ENCODE measurements at regions of chr1 and their contacts with region 1.

Region 1: GRCh38 chr1:205591522-205592351 is 40.1 kb downstream of the ELK4 start:
- DNase-seq: peak; percentile 74 to 91
- ATAC-seq: peak; percentile 83

Region 2: GRCh38 chr1:205211169-205211838 is 380.4 kb before region 1 on chr1 and contains the start of gene DSTYK:
- intact Hi-C with region 1: no loop called
- DNase-seq: peak; percentile 91 to 95
- ATAC-seq: peak; percentile 92
- total RNA-seq, gene DSTYK: 4.7 to 7.0 TPM

Region 3: GRCh38 chr1:205631727-205632373 is 40.1 kb after region 1 on chr1 and contains the start of gene ELK4:
- intact Hi-C with region 1: loop called in 1 of 2 experiments (anchors 5 kb)
- DNase-seq: peak; percentile 99 to 100
- ATAC-seq: peak; percentile 93
- total RNA-seq, gene ELK4: 37.4 to 39.5 TPM

Region 4: GRCh38 chr1:205658943-205659581 is 67.3 kb after region 1 on chr1:
- intact Hi-C with region 1: loop called (anchors 2 to 10 kb)
- DNase-seq: peak in 1 of 2 donors; percentile 87
- ATAC-seq: peak; percentile 84